ENCODE measurements at regions of chr5 and their contacts with region 1.

Region 1: GRCh38 chr5:5619546-5619945 is 197.1 kb downstream of the ICE1 start:
- DNase-seq: no peak
- ATAC-seq: no peak
- H3K4me3 ChIP-seq: no peak overlapping the region
- H3K4me3 Mint-ChIP-seq: no peak overlapping the region
- H3K27ac ChIP-seq: no peak overlapping the region
- H3K27ac Mint-ChIP-seq: no peak overlapping the region
- H3K4me1 ChIP-seq: no peaks in the 10 kb centered on the region
- H3K4me1 Mint-ChIP-seq: no peaks in the 10 kb centered on the region
- H3K27me3 ChIP-seq: no peaks in the 10 kb centered on the region
- H3K27me3 Mint-ChIP-seq: peaks cover 6 to 8% of the 10 kb centered on the region in 2 donors

Region 2: DNA sequence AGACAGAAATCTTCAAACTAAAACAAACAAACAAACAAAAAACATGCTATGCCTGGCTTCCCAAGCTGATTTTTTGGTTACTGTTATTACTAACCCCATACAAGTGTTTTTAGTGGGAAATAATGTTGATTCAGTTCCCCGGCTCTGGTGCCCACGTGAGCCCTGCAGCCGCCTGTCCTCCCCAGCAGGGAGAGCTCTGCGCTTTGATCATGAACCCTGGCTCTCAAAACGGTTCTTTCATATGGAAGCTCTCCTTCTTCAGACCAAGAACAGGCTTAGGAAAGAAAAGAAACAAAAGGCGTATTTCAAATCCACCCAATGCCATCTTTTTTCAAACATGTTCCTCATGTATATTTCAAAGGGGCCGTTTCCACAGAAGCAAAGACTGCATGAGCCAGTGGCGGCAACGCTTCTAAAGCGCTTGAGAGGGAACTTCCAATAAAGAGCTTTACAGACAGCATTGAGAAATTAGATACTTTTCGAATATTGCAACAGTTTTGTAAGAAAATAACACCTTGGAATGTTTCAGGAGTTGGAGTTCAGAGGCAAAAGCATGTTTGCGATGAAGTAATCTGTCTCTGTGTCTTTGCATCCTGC is 122.3 kb before region 1 on chr5:
- CTCF ChIA-PET with region 1: interaction called in 1 of 2 experiments, 11 read pairs
- POLR2A ChIA-PET with region 1: no interaction called
- DNase-seq: peak in 15 of 35 experiments; percentile 4 to 44 (median 11)
- ATAC-seq: no peak
- H3K4me3 ChIP-seq: no peak overlapping the region
- H3K4me3 Mint-ChIP-seq: no peak overlapping the region
- H3K27ac ChIP-seq: no peak overlapping the region
- H3K27ac Mint-ChIP-seq: no peak overlapping the region
- H3K4me1 ChIP-seq: peaks cover 2 to 18% of the 10 kb centered on the region in 2 experiments
- H3K4me1 Mint-ChIP-seq: peaks cover 16 to 29% (median 20%) of the 10 kb centered on the region in 3 donors
- H3K27me3 ChIP-seq: peaks cover 3 to 7% of the 10 kb centered on the region in 2 experiments
- H3K27me3 Mint-ChIP-seq: peaks cover 6 to 20% of the 10 kb centered on the region in 2 donors

Measured in T-cell (primary cell).